Body of pancreas (tissue), 4 donors: ENCODE measurements at regions of chr3 and their contacts with region 1.

Region 1: DNA sequence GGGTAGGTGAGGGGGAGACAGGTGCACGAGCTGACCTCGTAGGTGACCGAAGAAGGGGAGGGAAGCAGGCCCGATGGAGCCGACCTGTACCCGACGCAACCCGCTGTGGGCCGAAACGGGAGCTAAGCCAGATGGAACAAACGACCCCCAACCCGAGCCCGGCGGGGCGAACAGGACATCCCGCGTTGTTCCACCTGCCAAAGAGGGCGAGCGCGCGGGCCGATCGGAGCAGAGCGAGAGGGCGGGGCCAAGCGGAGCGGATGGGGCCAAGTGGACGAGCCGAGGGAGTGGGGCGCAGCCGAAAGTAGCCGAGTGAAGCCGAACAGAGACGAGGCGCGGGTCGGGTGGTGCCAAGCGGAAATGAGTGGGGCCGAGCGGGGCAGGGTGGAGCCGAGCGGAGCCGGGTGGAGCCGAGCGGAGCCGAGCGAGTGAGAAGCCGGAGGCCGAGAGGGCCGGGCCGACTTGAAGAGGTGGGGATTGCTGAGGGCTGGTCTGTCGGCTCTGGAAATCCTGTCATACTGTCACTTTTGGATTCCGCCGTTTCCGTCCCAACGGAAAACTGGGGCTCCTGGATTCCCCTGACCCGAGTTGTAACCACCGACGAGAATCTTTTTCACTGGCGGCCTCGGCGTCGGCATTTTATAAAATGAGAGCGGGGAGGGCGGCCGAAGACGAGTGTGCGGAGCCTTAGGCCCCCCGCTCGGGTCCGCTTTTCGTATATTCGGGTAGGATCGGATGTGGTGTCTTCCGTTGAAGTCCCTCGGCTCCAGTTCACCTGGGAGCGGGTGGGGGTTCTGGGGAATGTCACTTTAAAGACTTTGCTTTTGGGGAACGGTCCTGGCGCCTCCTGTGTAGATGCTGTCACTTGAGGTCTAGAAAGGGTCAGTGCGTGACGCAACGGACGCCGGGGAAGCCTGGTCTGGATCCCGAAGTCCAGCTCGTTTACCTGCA is 15.6 kb upstream of the WNT7A start:
- DNase-seq: peak; percentile 95 to 97 (median 96)
- ATAC-seq: peak; percentile 99
- H3K4me3 ChIP-seq: peak overlapping the region; percentile 19 to 23
- H3K27ac ChIP-seq: peak overlapping the region in 3 of 4 donors; percentile 42 to 61 (median 51)
- H3K4me1 ChIP-seq: peaks cover 8% of the 10 kb centered on the region
- H3K27me3 ChIP-seq: no peaks in the 10 kb centered on the region
- CTCF ChIP-seq: no peak
- POLR2A ChIP-seq: peak in 2 of 3 donors; percentile 68 to 78

Region 2: GRCh38 chr3:13857702-13858413 is 37.6 kb before region 1 on chr3:
- intact Hi-C with region 1: no loop called
- DNase-seq: no peak
- ATAC-seq: no peak
- H3K4me3 ChIP-seq: no peak overlapping the region
- H3K27ac ChIP-seq: no peak overlapping the region
- H3K4me1 ChIP-seq: no peaks in the 10 kb centered on the region
- H3K27me3 ChIP-seq: no peaks in the 10 kb centered on the region
- CTCF ChIP-seq: no peak
- POLR2A ChIP-seq: no peak

Region 3: GRCh38 chr3:13932578-13933295 is 37.3 kb after region 1 on chr3:
- intact Hi-C with region 1: no loop called
- DNase-seq: no peak
- ATAC-seq: no peak
- H3K4me3 ChIP-seq: no peak overlapping the region
- H3K27ac ChIP-seq: no peak overlapping the region
- H3K4me1 ChIP-seq: no peaks in the 10 kb centered on the region
- H3K27me3 ChIP-seq: no peaks in the 10 kb centered on the region
- CTCF ChIP-seq: no peak
- POLR2A ChIP-seq: no peak

Region 4: DNA sequence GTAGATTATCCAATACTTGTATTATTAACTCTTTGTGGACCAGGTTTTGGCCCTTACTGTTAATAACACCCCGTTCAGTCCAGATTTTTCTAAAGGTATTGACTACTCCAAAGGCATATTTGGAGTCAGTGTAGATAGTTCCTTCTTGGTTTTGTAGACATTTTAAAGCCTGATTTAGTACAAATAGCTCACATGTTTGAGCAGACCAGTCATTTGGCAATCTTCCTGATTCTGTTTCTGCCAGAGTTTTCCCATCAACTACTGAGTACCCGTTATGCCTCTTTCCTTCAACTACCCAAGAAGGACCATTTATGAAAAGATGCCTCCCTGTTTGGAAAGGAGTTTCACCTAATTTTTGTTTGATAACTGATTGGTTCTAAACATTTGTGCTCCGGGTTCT is 147.2 kb after region 1 on chr3:
- intact Hi-C with region 1: no loop called
- DNase-seq: no peak
- ATAC-seq: no peak
- H3K4me3 ChIP-seq: no peak overlapping the region
- H3K27ac ChIP-seq: no peak overlapping the region
- H3K4me1 ChIP-seq: no peaks in the 10 kb centered on the region
- H3K27me3 ChIP-seq: no peaks in the 10 kb centered on the region
- CTCF ChIP-seq: no peak
- POLR2A ChIP-seq: no peak

Region 5: GRCh38 chr3:14124615-14125190 is 229.3 kb after region 1 on chr3 and contains the starts of genes CHCHD4 and TMEM43:
- intact Hi-C with region 1: loop called (anchors 10 kb)
- DNase-seq: peak; percentile 99 to 100 (median 100)
- ATAC-seq: peak; percentile 96
- H3K4me3 ChIP-seq: peak within 1 kb of the TSS; percentile 55 to 69
- H3K27ac ChIP-seq: peak within 1 kb of the TSS; percentile 66 to 94 (median 92)
- H3K4me1 ChIP-seq: peaks cover 31% of the 10 kb centered on the region
- H3K27me3 ChIP-seq: no peaks in the 10 kb centered on the region
- CTCF ChIP-seq: peak in 1 of 7 experiments; percentile 24
- POLR2A ChIP-seq: peak; percentile 53 to 92 (median 87)
- total RNA-seq, gene CHCHD4: 1.3 to 7.0 TPM
- total RNA-seq, gene TMEM43: 21.8 to 38.4 TPM

Region 6: GRCh38 chr3:14461748-14462324 is 566.4 kb after region 1 on chr3:
- intact Hi-C with region 1: loop called (anchors 10 kb)
- DNase-seq: peak; percentile 35 to 47 (median 42)
- ATAC-seq: peak; percentile 30
- H3K4me3 ChIP-seq: no peak overlapping the region
- H3K27ac ChIP-seq: peak overlapping the region in 2 of 4 donors; percentile 40 to 58
- H3K4me1 ChIP-seq: peaks cover 43% of the 10 kb centered on the region
- H3K27me3 ChIP-seq: no peaks in the 10 kb centered on the region
- CTCF ChIP-seq: peak in 6 of 7 experiments; percentile 18 to 65 (median 42)
- POLR2A ChIP-seq: no peak